ENCODE measurements at regions of chr16 and their contacts with region 1.

Region 1: DNA sequence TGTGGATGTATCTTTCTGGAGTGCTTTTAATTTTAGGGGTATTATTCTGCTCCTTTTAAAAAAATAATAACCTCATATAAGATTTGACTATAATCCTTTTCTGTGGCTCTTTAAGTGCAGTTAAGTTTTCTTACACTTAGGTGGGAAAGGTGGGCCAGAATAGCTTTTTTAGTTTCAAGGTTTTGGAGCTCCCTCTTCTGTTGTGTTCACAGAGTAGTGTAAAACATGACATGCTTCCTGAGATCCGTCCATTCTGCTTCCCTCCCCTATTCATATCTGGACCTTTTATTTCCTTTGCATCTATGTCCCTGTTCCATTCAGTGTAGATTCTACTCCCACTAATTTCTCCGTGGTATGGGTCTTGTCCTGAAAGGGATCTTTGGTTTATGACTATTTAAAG is 12.8 kb downstream of the LRRC36 start:
- DNase-seq: no peak

Region 2: DNA sequence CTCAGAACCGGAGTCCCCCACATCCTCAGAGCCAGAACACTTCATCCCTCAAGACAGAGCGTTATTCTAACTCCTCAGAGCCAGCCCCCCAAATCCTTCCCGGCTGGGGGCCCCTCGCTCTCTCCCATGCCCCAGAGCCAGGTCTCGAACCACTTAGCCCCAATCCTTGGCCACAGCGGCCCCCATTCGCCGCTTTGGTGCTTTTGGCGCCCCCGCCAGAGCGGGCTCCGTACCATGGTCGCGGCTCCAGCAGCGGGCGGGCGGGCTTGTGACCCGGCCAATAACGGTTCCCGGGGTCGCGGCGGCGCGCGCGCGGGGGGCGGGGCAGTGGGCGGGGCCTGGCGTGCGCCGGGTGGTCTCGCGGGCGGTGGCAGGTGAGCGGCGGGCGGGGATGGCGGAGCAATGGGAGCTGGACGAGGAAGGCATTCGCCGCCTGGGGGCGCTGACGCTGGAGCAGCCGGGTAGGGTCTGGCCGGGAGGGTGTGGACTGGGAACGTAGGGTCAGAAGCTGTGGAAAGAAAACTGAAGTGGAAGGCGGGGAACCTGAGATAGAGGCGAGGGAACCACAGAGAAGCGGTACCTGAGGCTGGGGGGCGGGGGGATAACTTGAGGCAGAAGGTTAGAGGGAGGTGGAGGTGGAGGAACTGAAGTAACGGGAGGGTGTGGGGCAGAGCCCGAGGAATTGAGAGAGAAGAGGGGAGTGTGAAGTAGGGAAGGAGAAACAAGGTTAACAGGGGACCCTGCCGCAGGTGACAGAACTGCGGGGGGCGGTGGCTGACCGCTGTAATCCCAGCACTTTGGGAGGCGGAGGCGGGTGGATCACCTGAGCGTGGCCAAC is 12.8 kb before region 1 on chr16 and contains the starts of genes KCTD19 and LRRC36:
- CTCF ChIA-PET with region 1: interaction called, 11 read pairs
- POLR2A ChIA-PET with region 1: interaction called, 6 read pairs
- DNase-seq: peak; percentile 99

Region 3: DNA sequence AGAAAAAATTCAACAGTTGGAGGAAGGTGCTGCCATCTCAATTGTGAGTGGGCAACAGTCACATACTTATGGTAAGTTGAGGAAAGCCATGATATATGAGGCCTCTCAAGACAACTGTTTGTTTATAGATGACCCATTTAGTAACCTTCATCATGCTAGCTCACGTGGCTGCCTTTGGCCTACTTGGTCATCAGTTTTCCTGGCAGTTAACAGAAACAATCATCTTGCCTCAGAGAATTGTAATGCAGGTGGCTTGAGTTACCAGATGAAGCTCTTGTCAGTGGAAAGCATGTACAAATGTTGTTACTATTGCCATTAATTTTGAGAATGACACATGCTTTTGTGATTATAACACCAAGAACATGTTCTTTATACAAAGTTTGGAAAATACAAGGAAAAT is 39.2 kb after region 1 on chr16:
- CTCF ChIA-PET with region 1: no interaction called
- POLR2A ChIA-PET with region 1: no interaction called
- DNase-seq: no peak

Region 4: DNA sequence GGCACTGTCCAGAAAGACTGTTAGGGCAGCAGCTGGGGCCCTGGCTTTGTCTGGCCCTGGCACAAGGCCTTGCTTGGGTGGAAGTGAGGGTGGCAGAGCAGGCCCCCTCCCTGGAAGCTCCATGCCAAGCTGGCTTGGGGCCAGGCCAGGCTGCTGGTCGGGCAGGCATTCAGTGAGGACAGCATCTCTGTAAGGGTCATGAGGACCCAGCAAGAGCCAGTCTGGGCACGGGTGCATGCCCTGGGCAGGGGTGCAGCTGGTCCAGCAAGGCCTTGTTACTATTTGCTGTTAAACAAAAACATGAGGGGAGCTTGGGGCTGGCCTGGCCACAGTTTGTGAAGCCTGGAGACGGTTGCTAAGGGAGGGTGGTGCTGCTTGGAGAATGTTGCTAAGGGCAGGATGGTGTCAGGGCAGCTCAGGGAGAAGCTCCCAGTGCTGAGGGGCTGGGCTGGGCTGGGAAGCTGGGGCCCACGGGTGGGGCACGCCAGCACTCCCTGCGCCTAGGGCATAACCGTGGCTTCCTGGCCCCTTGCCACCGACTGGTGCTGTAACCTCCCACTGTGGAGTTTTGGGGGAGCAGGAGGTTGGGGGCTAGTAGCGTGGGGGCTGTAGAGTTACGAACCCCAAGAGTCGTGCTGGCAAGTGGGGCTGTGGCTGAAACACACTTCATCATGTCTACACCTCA is 52.1 kb after region 1 on chr16:
- CTCF ChIA-PET with region 1: no interaction called
- POLR2A ChIA-PET with region 1: no interaction called
- DNase-seq: no peak

Measured in HEK293T (cell line).